ENCODE measurements at regions of chr3 and their contacts with region 1.

Region 1: GRCh38 chr3:176939022-176939817 is 258.1 kb downstream of the TBL1XR1 start:
- DNase-seq: peak; percentile 37
- H3K4me3 ChIP-seq: no peak overlapping the region
- H3K27ac ChIP-seq: no peak overlapping the region
- H3K4me1 ChIP-seq: no peaks in the 10 kb centered on the region
- H3K27me3 ChIP-seq: no peaks in the 10 kb centered on the region
- CTCF ChIP-seq: peak; percentile 76

Region 2: GRCh38 chr3:176872771-176873209 is 66.4 kb before region 1 on chr3:
- intact Hi-C with region 1: loop called (anchors 2 kb)
- DNase-seq: peak; percentile 58
- H3K4me3 ChIP-seq: no peak overlapping the region
- H3K27ac ChIP-seq: no peak overlapping the region
- H3K4me1 ChIP-seq: no peaks in the 10 kb centered on the region
- H3K27me3 ChIP-seq: no peaks in the 10 kb centered on the region
- CTCF ChIP-seq: peak; percentile 72